Body of pancreas (tissue), 4 donors: ENCODE measurements at regions of chr20 and their contacts with region 1.

Region 1: DNA sequence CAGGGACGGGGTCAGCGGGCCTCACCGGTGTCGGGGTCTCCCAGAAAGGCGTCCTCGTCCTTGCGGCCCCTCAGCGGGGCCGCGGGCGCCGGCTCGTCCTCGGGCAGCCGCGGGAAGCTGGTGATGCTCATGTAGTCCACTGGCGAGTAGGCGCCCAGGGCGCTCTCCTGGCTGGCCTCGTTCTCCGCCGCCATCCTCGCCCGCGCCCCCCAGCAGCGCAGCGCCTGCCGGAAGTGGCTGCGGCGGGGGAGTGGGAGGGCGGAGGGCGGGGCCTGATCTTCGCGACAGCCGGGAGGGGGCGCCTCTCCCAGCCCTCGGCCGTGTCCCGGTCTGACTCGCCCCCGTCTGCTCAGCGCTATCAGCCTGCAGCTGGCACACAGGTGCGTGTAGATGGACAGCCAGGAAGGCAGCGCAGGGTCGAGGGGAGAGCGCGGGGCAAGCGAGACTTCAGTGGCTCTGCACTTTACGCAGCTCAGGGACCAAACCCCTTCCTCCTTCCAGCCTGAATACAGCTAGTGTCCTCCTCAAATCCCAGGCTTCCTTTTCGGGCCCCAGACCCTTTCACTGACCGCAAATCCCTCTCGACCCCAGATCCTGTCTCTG is at the start of gene GGT7:
- DNase-seq: peak; percentile 86 to 92 (median 89)
- ATAC-seq: peak; percentile 57
- H3K4me3 ChIP-seq: peak within 1 kb of the TSS; percentile 75 to 83
- H3K27ac ChIP-seq: peak within 1 kb of the TSS; percentile 43 to 84 (median 62)
- H3K4me1 ChIP-seq: peaks cover 47% of the 10 kb centered on the region
- H3K27me3 ChIP-seq: no peaks in the 10 kb centered on the region
- CTCF ChIP-seq: peak; percentile 61 to 75 (median 68)
- POLR2A ChIP-seq: peak; percentile 44 to 71 (median 70)
- total RNA-seq, gene GGT7: 19.2 to 22.7 TPM

Region 2: DNA sequence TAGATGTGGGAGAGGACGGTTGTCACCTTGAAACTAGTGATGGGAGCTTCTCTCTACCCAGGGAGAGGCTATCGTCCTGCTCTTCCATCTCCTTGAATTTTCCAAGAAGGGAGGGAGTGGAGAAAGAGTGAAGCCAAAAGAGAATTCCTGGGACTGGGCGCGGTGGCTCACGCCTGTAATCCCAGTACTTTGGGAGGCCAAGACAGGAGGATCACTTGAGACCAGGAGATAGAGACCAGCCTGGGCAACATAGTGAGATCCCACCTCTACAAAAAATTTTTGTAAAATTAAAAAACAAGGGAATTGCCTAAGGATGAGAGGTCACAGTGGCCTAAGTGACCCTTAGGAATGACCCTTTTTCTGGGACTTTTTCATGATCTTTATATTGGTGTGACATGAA is 91.8 kb after region 1 on chr20:
- intact Hi-C with region 1: loop called (anchors 5 kb)
- DNase-seq: no peak
- ATAC-seq: no peak
- H3K4me3 ChIP-seq: no peak overlapping the region
- H3K27ac ChIP-seq: no peak overlapping the region
- H3K4me1 ChIP-seq: no peaks in the 10 kb centered on the region
- H3K27me3 ChIP-seq: no peaks in the 10 kb centered on the region
- CTCF ChIP-seq: no peak
- POLR2A ChIP-seq: no peak